Right cardiac atrium (tissue), 5 donors: ENCODE measurements at regions of chr1 and their contacts with region 1.

Region 1: GRCh38 chr1:212814537-212815334 is 23.0 kb downstream of the TATDN3 start:
- DNase-seq: no peak
- ATAC-seq: no peak
- H3K4me3 ChIP-seq: no peak overlapping the region
- H3K27ac ChIP-seq: no peak overlapping the region
- H3K4me1 ChIP-seq: no peaks in the 10 kb centered on the region
- H3K27me3 ChIP-seq: no peaks in the 10 kb centered on the region

Region 2: GRCh38 chr1:212857992-212858460 is 43.3 kb after region 1 on chr1 and contains the start of gene FLVCR1:
- intact Hi-C with region 1: no loop called
- DNase-seq: peak; percentile 98 to 99 (median 99)
- ATAC-seq: peak; percentile 100
- H3K4me3 ChIP-seq: peak within 1 kb of the TSS; percentile 79
- H3K27ac ChIP-seq: peak within 1 kb of the TSS; percentile 75
- H3K4me1 ChIP-seq: peaks cover 5% of the 10 kb centered on the region
- H3K27me3 ChIP-seq: no peaks in the 10 kb centered on the region
- total RNA-seq, gene FLVCR1: 2.5 to 4.7 (median 3.3) TPM

Region 3: GRCh38 chr1:212928323-212929291 is 113.9 kb after region 1 on chr1:
- intact Hi-C with region 1: no loop called
- DNase-seq: no peak
- ATAC-seq: no peak
- H3K4me3 ChIP-seq: no peak overlapping the region
- H3K27ac ChIP-seq: no peak overlapping the region
- H3K4me1 ChIP-seq: no peaks in the 10 kb centered on the region
- H3K27me3 ChIP-seq: no peaks in the 10 kb centered on the region

Region 4: DNA sequence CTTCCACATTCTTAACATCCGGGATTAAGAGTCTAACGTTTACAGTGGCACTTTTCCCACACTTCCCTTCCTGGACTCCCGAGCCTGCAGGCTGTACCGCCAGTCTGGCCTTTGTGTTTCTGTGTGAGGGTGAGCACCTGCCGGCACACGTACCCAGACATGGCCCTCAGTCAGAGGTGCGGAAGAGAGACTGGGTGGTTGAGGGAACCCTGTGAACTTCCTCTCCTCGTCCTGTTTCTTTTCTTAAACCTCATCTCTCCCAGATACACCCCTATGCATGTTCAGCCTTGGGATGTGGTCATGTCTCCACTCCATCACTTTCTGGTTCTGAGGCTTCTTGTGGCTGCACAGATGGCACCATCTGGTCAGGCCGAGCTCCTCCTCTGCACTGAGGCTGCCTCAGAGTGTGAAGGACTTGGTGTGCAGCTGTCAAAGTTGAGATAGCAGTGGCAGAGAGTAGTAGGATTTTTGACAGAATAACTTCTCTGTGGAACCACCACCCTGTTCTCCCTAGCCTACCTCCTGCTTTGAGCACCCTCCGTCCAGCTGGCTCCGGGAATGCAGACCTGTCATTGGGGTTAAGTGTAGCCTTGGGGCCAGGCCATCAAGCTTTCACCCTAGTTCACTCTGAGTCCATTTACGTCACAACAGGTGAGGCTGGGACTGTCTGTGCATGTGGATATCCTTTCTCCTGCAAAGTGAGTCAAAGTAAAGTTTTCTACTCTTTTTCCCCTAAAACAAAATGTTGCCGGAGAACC is 167.0 kb after region 1 on chr1:
- intact Hi-C with region 1: loop called in 1 of 4 experiments (anchors 10 kb)
- DNase-seq: peak in 1 of 3 donors; percentile 36
- ATAC-seq: peak; percentile 30 to 39
- H3K4me3 ChIP-seq: no peak overlapping the region
- H3K27ac ChIP-seq: no peak overlapping the region
- H3K4me1 ChIP-seq: peaks cover 20% of the 10 kb centered on the region
- H3K27me3 ChIP-seq: no peaks in the 10 kb centered on the region

Region 5: GRCh38 chr1:212990276-212990675 is 175.5 kb after region 1 on chr1:
- intact Hi-C with region 1: loop called (anchors 5 to 10 kb)
- DNase-seq: no peak
- ATAC-seq: no peak
- H3K4me3 ChIP-seq: no peak overlapping the region
- H3K27ac ChIP-seq: no peak overlapping the region
- H3K4me1 ChIP-seq: no peaks in the 10 kb centered on the region
- H3K27me3 ChIP-seq: no peaks in the 10 kb centered on the region